Thyroid gland (tissue), 4 donors: ENCODE measurements at regions of chr6 and their contacts with region 1.

Region 1: DNA sequence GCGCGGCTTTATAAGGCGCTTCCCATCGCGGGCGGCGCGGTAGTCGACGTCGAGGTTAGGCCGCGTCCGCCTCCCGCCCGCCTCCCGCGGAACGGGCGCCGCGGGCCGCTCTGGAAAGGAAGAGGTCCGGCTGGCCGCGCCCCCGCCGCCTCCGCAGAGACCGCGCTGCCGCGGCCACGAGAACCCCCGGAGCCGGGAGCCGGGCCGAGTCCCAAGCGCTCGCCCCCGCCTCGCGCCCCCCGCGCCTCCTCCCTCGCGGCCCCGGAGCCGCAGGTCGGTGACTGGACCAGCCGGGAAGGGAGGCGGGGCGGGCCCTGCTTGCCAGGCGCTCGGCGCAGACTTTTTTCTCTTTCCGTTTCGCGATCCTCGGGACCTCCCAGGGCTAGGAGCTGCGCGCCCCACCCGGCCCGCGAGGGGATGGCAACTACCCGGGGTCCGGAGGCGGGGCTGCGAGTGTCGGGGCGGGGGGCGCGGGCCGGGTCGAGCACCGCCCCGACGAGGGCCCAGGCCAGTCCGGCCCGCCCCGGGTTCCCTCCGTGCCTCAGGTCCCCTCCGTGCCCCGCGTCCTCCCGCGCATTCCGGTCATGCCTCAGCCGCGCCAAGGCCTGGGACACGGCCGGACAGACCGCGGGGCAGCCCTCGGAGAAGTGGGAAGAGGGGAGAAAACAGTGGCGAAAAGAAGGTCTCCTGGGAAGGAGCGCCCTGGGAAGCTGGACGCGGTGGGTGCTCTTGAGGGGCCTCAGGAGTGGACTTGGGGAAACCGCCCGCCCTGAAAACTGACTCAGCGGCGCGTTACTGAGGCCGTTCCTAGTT is 423 bp upstream of the PXDC1 start:
- DNase-seq: peak; percentile 93 to 95
- H3K4me3 ChIP-seq: peak overlapping the region; percentile 50 to 92 (median 77)
- H3K27ac ChIP-seq: peak overlapping the region; percentile 93 to 100 (median 100)
- H3K4me1 ChIP-seq: peaks cover 28 to 32% of the 10 kb centered on the region in 2 donors
- H3K27me3 ChIP-seq: no peaks in the 10 kb centered on the region
- CTCF ChIP-seq: peak in 4 of 6 experiments; percentile 33 to 58 (median 52)
- POLR2A ChIP-seq: peak; percentile 83 to 93

Region 2: GRCh38 chr6:3800850-3801591 is 49.1 kb after region 1 on chr6:
- intact Hi-C with region 1: loop called (anchors 5 kb)
- DNase-seq: peak; percentile 58 to 65
- H3K4me3 ChIP-seq: no peak overlapping the region
- H3K27ac ChIP-seq: peak overlapping the region; percentile 65 to 96 (median 81)
- H3K4me1 ChIP-seq: peaks cover 33 to 70% of the 10 kb centered on the region in 2 donors
- H3K27me3 ChIP-seq: no peaks in the 10 kb centered on the region
- CTCF ChIP-seq: no peak
- POLR2A ChIP-seq: peak in 1 of 2 donors; percentile 23

Region 3: GRCh38 chr6:3825851-3826581 is 74.1 kb after region 1 on chr6:
- intact Hi-C with region 1: loop called (anchors 2 kb)
- DNase-seq: peak; percentile 90 to 94
- H3K4me3 ChIP-seq: no peak overlapping the region
- H3K27ac ChIP-seq: peak overlapping the region; percentile 98 to 99 (median 99)
- H3K4me1 ChIP-seq: peaks cover 29 to 37% of the 10 kb centered on the region in 2 donors
- H3K27me3 ChIP-seq: no peaks in the 10 kb centered on the region
- CTCF ChIP-seq: no peak
- POLR2A ChIP-seq: peak in 1 of 2 donors; percentile 57

Region 4: DNA sequence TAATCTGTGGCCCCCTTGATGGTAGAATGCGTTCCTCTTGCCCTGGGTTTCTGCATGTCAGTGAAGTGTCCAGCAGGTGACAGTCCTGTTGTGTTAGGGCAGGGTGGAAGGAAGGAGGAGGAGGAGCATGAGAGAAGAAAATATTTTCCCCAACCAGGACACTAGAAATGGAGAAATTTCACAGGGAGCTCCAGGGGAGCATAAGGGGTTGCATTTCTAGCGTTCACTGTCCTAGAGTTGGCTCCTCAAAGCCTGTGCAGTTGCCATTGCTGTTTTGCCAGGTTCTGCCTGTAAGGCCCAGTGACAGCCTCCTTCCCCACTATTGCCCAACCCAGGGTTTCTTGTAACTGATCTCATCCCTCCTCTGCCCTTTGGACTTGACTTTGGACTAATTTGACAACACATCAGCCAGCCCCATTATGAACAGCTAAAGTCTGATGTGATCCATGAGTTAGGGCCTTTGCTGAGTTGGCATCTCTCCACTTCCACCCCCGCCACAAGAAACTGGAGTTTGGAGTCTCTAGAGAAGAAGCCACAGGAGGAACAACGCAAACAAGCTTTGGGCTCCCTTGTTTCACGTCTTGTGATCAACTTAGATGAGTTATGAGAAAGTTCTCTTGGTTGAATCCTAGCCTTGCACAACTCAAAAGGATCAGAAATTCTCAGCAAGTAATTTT is 83.3 kb after region 1 on chr6:
- intact Hi-C with region 1: loop called (anchors 5 kb)
- DNase-seq: peak; percentile 19 to 32
- H3K4me3 ChIP-seq: no peak overlapping the region
- H3K27ac ChIP-seq: peak overlapping the region in 1 of 3 donors; percentile 3
- H3K4me1 ChIP-seq: no peaks in the 10 kb centered on the region
- H3K27me3 ChIP-seq: no peaks in the 10 kb centered on the region
- CTCF ChIP-seq: peak in 4 of 6 experiments; percentile 19 to 40 (median 34)
- POLR2A ChIP-seq: no peak

Region 5: GRCh38 chr6:3887150-3887700 is 135.3 kb after region 1 on chr6:
- intact Hi-C with region 1: loop called (anchors 5 kb)
- DNase-seq: peak; percentile 59 to 69
- H3K4me3 ChIP-seq: no peak overlapping the region
- H3K27ac ChIP-seq: peak overlapping the region in 1 of 3 donors; percentile 62
- H3K4me1 ChIP-seq: peaks cover 15 to 28% of the 10 kb centered on the region in 2 donors
- H3K27me3 ChIP-seq: no peaks in the 10 kb centered on the region
- CTCF ChIP-seq: peak in 4 of 6 experiments; percentile 39 to 56 (median 48)
- POLR2A ChIP-seq: peak in 1 of 2 donors; percentile 12